Activated naive CD4-positive, alpha-beta T cell treated with anti-CD3 and anti-CD28 coated beads for 36 hours (primary cell): ENCODE measurements at regions of chr5 and their contacts with region 1.

Region 1: DNA sequence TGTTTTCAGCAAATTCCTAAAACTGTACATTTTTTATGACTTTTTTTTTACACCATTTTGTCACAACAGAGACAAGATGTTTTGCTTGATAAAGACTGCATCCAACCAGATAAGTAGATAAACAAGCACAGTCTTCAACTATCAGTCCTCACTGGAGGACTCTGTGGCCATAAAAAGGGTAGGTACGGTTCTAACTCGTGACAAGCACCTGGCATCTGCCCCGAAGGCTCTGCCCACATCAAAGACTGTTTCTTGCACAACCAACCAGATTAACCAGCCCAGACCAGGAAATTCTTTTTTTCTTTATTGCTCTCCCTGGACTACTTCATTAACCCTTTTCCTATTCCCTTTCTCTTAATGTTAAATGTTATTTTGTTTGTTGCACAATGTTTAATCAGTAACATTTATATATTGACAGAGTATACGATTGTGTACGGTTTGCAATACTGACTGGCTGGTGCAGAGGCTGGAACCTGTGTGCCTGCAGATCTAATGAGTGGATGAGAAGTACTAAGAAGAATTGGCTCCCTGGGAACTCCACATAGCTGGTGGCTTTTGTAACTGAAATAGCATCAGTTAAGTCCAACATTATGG is 74.1 kb downstream of the SERINC5 start:
- DNase-seq: peak; percentile 69
- H3K4me3 Mint-ChIP-seq: peak overlapping the region; percentile 54
- H3K27ac Mint-ChIP-seq: peak overlapping the region; percentile 83
- H3K4me1 Mint-ChIP-seq: peaks cover 87% of the 10 kb centered on the region
- H3K27me3 Mint-ChIP-seq: no peaks in the 10 kb centered on the region

Region 2: DNA sequence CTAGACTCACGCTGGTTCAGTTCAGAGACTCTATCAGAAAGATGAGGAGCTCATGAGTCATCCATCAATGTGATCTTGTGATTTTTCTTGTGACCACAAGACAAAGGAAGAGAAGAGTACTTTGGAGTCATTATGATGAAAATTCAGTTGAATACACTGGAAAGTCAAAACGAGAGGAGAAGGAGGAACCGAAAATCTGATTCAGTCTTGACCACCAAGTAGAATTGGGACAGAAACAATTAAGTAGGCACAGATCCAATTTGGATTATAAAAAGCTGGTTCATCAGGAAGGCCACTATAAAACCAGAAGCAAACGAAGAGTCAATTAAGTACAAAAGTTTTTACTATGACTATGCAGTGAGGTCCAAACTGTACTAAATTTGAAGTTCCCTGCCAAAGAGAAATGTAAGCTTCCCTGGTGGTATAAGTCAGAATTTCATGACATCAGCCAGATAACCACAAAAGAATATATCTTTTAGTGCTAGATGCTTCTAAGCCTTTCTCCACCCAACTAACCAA is 55.7 kb before region 1 on chr5:
- CTCF ChIA-PET with region 1: no interaction called
- intact Hi-C with region 1: loop called (anchors 1 kb)
- DNase-seq: peak; percentile 44
- H3K4me3 Mint-ChIP-seq: no peak overlapping the region
- H3K27ac Mint-ChIP-seq: peak overlapping the region; percentile 43
- H3K4me1 Mint-ChIP-seq: peaks cover 47% of the 10 kb centered on the region
- H3K27me3 Mint-ChIP-seq: no peaks in the 10 kb centered on the region

Region 3: GRCh38 chr5:80141147-80141671 is 40.5 kb before region 1 on chr5:
- CTCF ChIA-PET with region 1: no interaction called
- intact Hi-C with region 1: loop called (anchors 2 kb)
- DNase-seq: no peak
- H3K4me3 Mint-ChIP-seq: no peak overlapping the region
- H3K27ac Mint-ChIP-seq: peak overlapping the region; percentile 84
- H3K4me1 Mint-ChIP-seq: peaks cover 69% of the 10 kb centered on the region
- H3K27me3 Mint-ChIP-seq: no peaks in the 10 kb centered on the region

Region 4: GRCh38 chr5:80153586-80154126 is 28.1 kb before region 1 on chr5:
- CTCF ChIA-PET with region 1: interaction called, 3 read pairs
- intact Hi-C with region 1: loop called (anchors 2 kb)
- DNase-seq: no peak
- H3K4me3 Mint-ChIP-seq: no peak overlapping the region
- H3K27ac Mint-ChIP-seq: peak overlapping the region; percentile 86
- H3K4me1 Mint-ChIP-seq: peaks cover 53% of the 10 kb centered on the region
- H3K27me3 Mint-ChIP-seq: no peaks in the 10 kb centered on the region

Region 5: DNA sequence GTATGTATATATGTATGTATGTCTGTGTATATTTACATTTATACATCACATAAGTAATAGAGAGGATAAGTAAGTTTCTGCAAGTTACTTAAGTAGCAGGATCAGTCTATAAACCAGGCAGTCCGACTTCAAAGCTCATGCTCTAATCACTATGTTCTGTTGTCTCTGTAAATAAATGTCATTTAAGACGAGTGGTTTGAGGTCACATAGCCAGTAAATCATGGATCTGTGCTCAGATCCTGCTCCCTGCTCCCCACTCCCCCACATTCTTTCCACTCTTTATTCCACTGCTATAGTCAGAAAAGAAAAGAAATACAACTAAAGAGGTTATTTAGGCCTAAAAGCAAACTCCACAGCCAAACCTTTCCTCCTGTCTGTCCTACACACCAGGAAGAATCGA is 16.3 kb before region 1 on chr5:
- CTCF ChIA-PET with region 1: interaction called, 3 read pairs
- intact Hi-C with region 1: loop called (anchors 1 kb)
- DNase-seq: no peak
- H3K4me3 Mint-ChIP-seq: no peak overlapping the region
- H3K27ac Mint-ChIP-seq: peak overlapping the region; percentile 25
- H3K4me1 Mint-ChIP-seq: peaks cover 50% of the 10 kb centered on the region
- H3K27me3 Mint-ChIP-seq: no peaks in the 10 kb centered on the region

Region 6: DNA sequence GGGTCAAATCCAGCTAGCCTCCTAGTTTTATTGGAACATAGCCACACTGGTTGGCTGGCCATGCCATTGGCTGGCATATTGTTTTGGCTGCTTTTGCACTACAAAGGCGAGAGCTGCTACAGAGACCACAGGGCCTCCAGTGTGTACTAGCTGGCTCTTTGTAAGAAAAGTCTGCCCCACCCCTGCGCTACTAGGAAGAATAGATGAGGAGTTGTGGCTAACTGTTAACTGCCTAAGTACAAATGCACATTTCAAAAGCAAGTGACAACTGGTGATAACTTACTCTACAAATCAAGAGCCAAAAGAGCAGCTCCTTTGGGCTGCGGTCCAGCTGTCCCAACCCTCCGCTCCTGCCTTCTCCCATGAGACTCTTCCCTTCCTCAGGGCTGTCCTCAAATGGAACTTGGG is 10.3 kb after region 1 on chr5:
- CTCF ChIA-PET with region 1: interaction called, 5 read pairs
- intact Hi-C with region 1: loop called (anchors 1 kb)
- DNase-seq: peak; percentile 59
- H3K4me3 Mint-ChIP-seq: peak overlapping the region; percentile 69
- H3K27ac Mint-ChIP-seq: peak overlapping the region; percentile 97
- H3K4me1 Mint-ChIP-seq: peaks cover 80% of the 10 kb centered on the region
- H3K27me3 Mint-ChIP-seq: no peaks in the 10 kb centered on the region

Region 7: GRCh38 chr5:80204808-80205614 is 23.3 kb after region 1 on chr5:
- CTCF ChIA-PET with region 1: interaction called, 13 read pairs
- intact Hi-C with region 1: no loop called
- DNase-seq: peak; percentile 46
- H3K4me3 Mint-ChIP-seq: no peak overlapping the region
- H3K27ac Mint-ChIP-seq: peak overlapping the region; percentile 88
- H3K4me1 Mint-ChIP-seq: peaks cover 82% of the 10 kb centered on the region
- H3K27me3 Mint-ChIP-seq: no peaks in the 10 kb centered on the region